Dorsolateral prefrontal cortex (tissue), 120 donors: ENCODE measurements at regions of chr5 and their contacts with region 1.

Region 1: GRCh38 chr5:67156976-67157583 is 39.5 kb downstream of the CD180 start:
- DNase-seq: peak in 1 of 10 donors; percentile 27
- H3K4me3 ChIP-seq: no peak overlapping the region
- H3K27ac ChIP-seq: no peak overlapping the region
- H3K27me3 ChIP-seq: no peaks in the 10 kb centered on the region
- CTCF ChIP-seq: peak; percentile 56 to 92 (median 85)

Region 2: DNA sequence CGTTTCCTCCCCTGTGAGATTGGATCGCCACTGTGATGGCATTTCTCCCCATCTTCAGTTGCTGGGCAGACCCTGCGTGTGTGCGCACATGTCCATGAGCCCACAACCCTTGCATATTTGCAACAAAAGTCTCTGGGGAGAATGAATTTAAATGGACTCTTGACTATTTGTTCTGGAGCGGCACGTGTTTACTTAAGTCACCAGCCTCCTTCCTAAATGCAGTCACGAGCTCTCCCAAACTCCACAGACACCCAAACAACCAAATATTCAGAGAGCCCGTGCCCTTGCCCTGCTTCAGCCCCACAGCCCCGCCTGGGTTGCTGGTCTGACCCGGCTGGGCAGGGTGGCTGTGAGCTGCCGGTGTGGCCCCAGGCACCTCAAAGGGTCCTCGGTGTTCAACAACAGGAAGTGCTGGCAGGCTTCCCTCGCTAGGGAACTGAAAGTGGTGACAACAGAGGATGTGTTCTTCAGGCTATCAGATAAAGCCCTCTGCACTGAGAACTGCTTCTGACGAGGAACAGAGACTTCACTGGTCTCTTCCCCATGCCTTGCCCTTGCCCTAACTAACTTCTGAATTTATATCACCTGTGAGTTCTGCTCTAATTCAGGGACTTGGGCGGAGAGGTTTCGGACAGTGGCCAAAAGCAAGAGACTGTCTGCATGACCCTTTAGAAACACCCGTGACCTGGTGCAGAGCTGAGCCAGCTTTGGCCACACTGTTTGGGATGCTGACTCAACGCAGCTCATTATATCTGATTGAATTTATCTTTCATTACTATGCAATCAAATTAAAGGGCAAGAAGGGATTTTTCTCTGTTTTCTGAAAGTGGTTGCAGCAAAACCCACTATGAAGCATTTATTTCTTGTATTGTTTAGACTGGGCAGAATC is 58.7 kb after region 1 on chr5:
- intact Hi-C with region 1: loop called in 1 of 2 experiments (anchors 2 kb)
- DNase-seq: peak in 6 of 10 donors; percentile 44 to 65 (median 60)
- H3K4me3 ChIP-seq: peak overlapping the region in 43 of 59 donors; percentile 3 to 48 (median 34)
- H3K27ac ChIP-seq: peak overlapping the region in 36 of 59 donors; percentile 5 to 81 (median 38)
- H3K27me3 ChIP-seq: no peaks in the 10 kb centered on the region
- CTCF ChIP-seq: peak in 1 of 56 donors; percentile 10

Region 3: DNA sequence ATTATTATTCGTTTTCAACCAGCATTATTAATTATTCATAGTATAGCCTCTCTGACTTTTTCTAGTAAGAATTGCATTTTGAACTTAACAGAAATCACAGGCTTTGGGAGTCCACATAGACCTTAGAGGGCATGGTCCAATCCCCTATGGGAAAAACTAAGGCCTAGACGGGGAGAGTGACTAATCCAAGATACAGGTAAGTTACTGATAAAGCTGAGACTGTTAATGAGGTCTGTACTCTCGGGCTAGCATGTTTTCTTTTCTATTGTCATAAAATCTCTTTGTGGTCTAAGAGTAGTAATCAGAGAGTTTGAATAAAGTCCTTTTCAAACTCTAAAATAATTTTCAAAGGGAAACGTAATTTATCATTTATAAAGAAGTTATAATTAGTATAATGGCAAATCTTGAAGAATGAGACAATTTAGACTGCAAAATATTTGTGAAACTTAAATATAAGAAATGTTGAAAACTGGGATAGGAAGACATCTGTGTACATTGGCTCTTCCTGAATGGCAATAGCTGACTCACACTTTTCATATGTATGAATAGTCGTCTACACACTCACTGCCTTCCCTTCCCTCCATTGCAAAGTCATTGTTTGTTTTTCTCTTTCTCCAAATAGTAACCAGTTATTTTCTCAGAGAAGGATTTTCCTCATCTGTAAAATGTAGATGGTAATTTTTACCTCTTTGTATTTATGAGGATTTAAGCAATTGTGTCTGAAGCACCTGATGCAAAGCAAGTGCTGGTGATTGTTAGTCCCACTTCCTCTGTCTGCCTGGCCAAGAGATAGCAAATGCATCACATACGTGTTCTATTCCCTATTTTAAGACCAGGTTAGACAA is 247.4 kb after region 1 on chr5:
- intact Hi-C with region 1: loop called in 1 of 2 experiments (anchors 10 kb)
- DNase-seq: no peak
- H3K4me3 ChIP-seq: no peak overlapping the region
- H3K27ac ChIP-seq: no peak overlapping the region
- H3K27me3 ChIP-seq: no peaks in the 10 kb centered on the region
- CTCF ChIP-seq: no peak